ENCODE measurements at regions of chr15 and their contacts with region 1.

Region 1: DNA sequence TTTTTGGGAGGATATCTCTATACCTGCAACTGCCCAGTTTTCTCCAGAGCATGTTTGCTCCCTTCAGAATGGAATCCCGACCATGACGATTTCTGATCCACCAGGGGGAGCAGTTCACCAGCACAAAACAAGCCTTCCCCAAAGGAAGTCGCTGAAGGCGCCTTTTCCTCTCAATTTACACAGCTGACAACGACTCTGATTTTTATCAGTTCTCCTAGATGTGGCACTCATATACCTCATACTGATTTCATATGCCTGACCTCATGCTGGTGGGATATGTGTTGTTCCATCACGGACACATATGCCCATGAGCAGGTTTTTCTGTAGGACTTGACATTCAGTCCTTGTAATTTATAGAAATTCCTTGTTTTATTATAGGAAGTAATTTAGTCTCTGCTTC is 1028.2 kb downstream of the MCTP2 start:
- DNase-seq: peak; percentile 77
- H3K4me3 Mint-ChIP-seq: no peak overlapping the region
- H3K27ac Mint-ChIP-seq: no peak overlapping the region
- H3K4me1 Mint-ChIP-seq: no peaks in the 10 kb centered on the region
- H3K27me3 Mint-ChIP-seq: no peaks in the 10 kb centered on the region
- CTCF ChIP-seq: peak; percentile 63

Region 2: GRCh38 chr15:95025924-95026728 is 233.4 kb before region 1 on chr15:
- CTCF ChIA-PET with region 1: interaction called, 25 read pairs
- POLR2A ChIA-PET with region 1: interaction called, 4 read pairs
- intact Hi-C with region 1: loop called (anchors 1 kb)
- DNase-seq: peak; percentile 73
- H3K4me3 Mint-ChIP-seq: no peak overlapping the region
- H3K27ac Mint-ChIP-seq: no peak overlapping the region
- H3K4me1 Mint-ChIP-seq: no peaks in the 10 kb centered on the region
- H3K27me3 Mint-ChIP-seq: no peaks in the 10 kb centered on the region
- CTCF ChIP-seq: peak; percentile 78

Region 3: GRCh38 chr15:95269242-95270183 is 10.0 kb after region 1 on chr15:
- CTCF ChIA-PET with region 1: interaction called, 20 read pairs
- POLR2A ChIA-PET with region 1: no interaction called
- intact Hi-C with region 1: no loop called
- DNase-seq: no peak
- H3K4me3 Mint-ChIP-seq: no peak overlapping the region
- H3K27ac Mint-ChIP-seq: no peak overlapping the region
- H3K4me1 Mint-ChIP-seq: no peaks in the 10 kb centered on the region
- H3K27me3 Mint-ChIP-seq: no peaks in the 10 kb centered on the region
- CTCF ChIP-seq: no peak

Region 4: GRCh38 chr15:95541301-95541700 is 281.8 kb after region 1 on chr15:
- CTCF ChIA-PET with region 1: no interaction called
- POLR2A ChIA-PET with region 1: no interaction called
- intact Hi-C with region 1: no loop called
- DNase-seq: no peak
- H3K4me3 Mint-ChIP-seq: no peak overlapping the region
- H3K27ac Mint-ChIP-seq: no peak overlapping the region
- H3K4me1 Mint-ChIP-seq: no peaks in the 10 kb centered on the region
- H3K27me3 Mint-ChIP-seq: no peaks in the 10 kb centered on the region
- CTCF ChIP-seq: no peak

Region 5: GRCh38 chr15:96345560-96346399 is 1086.3 kb after region 1 on chr15:
- CTCF ChIA-PET with region 1: interaction called, 5 read pairs
- POLR2A ChIA-PET with region 1: no interaction called
- intact Hi-C with region 1: loop called (anchors 1 kb)
- DNase-seq: peak; percentile 23
- H3K4me3 Mint-ChIP-seq: no peak overlapping the region
- H3K27ac Mint-ChIP-seq: no peak overlapping the region
- H3K4me1 Mint-ChIP-seq: peaks cover 9% of the 10 kb centered on the region
- H3K27me3 Mint-ChIP-seq: no peaks in the 10 kb centered on the region
- CTCF ChIP-seq: peak; percentile 48

Region 6: DNA sequence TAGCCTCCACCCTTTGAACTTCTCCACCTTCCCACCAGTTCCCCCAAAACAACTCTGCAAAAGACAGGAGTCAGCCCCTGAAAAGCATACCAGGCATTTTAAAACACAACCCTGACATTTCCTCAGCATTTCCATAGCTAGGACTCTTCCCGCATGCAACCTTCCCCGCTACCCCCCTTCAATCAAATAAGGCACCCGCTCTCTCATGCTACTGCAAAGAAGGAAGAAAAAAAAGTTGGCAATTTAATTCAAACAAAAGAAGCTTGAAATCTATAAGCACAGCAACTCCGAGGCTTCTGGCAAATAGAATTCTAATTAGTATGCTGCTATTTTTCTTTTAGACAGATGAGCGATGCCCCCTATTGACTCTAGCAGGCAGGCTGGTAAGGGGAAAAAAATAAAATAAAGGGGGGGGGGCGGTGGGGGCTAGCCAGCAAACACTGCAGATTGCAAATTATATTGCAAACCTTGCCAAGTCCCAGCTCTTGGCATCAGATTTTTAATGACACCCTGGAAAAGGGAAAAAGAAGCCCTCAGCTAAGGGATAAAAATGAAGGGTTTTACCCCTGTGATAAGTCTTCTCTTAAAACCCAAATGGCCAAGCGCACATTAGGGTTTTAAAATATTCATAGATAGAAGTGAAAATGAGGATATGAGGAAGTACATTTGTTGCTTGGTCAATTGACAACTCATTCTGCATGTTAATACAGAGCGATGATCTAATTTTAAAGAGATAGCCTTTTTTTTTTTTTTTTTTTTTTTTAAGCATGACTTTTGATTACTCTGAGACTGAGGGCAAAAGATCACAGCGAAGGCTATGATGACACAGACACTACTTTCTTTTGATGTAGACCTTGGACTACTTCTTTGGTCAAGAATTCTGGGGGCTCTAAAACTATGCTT is 1326.2 kb after region 1 on chr15:
- CTCF ChIA-PET with region 1: no interaction called
- POLR2A ChIA-PET with region 1: no interaction called
- intact Hi-C with region 1: loop called (anchors 10 kb)
- DNase-seq: peak; percentile 8
- H3K4me3 Mint-ChIP-seq: no peak overlapping the region
- H3K27ac Mint-ChIP-seq: no peak overlapping the region
- H3K4me1 Mint-ChIP-seq: no peaks in the 10 kb centered on the region
- H3K27me3 Mint-ChIP-seq: peaks cover 87% of the 10 kb centered on the region
- CTCF ChIP-seq: no peak